CD8-positive, alpha-beta T cell (primary cell): ENCODE measurements at regions of chr2 and their contacts with region 1.

Region 1: GRCh38 chr2:108423502-108424252 is 25.3 kb upstream of the GCC2 start:
- DNase-seq: no peak
- ATAC-seq: no peak
- H3K4me3 ChIP-seq: no peak overlapping the region
- H3K4me3 Mint-ChIP-seq: no peak overlapping the region
- H3K27ac ChIP-seq: no peak overlapping the region
- H3K27ac Mint-ChIP-seq: no peak overlapping the region
- H3K4me1 ChIP-seq: no peaks in the 10 kb centered on the region
- H3K4me1 Mint-ChIP-seq: no peaks in the 10 kb centered on the region
- H3K27me3 ChIP-seq: no peaks in the 10 kb centered on the region
- H3K27me3 Mint-ChIP-seq: peaks cover 22% of the 10 kb centered on the region
- CTCF ChIP-seq: no peak

Region 2: DNA sequence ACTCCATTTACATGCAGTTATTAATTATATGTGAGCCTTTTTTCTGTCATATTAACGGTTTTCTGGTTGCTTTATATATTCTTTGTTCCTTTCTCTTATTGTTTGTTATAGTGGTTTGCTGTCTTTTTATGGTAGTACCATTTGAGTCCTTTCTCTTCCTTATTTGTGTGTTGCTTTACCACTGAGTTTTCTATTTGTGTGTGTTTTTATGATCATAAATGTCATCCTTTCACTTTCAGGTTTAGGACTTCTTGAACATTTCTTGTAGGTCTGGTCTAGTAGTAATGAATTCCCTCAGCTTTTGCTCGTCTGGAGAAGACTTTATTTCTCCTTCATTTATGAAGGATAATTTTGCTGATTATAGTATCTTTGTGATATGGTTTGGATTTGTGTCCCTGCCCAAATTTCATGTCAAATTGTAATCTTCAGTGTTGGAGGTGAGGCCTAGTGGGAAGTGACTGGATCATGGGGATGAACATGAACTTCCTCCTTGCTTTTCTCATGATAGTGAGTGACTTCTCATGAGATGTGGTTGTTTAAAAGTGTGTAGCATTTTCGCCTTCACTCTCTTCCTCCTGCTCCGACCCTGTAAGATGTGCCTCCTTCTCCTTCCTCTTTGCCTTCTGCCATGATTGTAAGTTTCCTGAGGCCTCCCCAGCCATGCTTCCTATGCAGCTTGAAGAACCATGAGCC is 36.8 kb after region 1 on chr2:
- CTCF ChIA-PET with region 1: no interaction called
- POLR2A ChIA-PET with region 1: no interaction called
- intact Hi-C with region 1: loop called in 1 of 2 experiments (anchors 1 kb)
- DNase-seq: no peak
- ATAC-seq: no peak
- H3K4me3 ChIP-seq: no peak overlapping the region
- H3K4me3 Mint-ChIP-seq: peak overlapping the region; percentile 40
- H3K27ac ChIP-seq: peak overlapping the region in 1 of 2 experiments; percentile 4
- H3K27ac Mint-ChIP-seq: no peak overlapping the region
- H3K4me1 ChIP-seq: peaks cover 6% of the 10 kb centered on the region
- H3K4me1 Mint-ChIP-seq: peaks cover 72% of the 10 kb centered on the region
- H3K27me3 ChIP-seq: no peaks in the 10 kb centered on the region
- H3K27me3 Mint-ChIP-seq: no peaks in the 10 kb centered on the region
- CTCF ChIP-seq: no peak